Naive thymus-derived CD8-positive, alpha-beta T cell (primary cell): ENCODE measurements at regions of chr1 and their contacts with region 1.

Region 1: DNA sequence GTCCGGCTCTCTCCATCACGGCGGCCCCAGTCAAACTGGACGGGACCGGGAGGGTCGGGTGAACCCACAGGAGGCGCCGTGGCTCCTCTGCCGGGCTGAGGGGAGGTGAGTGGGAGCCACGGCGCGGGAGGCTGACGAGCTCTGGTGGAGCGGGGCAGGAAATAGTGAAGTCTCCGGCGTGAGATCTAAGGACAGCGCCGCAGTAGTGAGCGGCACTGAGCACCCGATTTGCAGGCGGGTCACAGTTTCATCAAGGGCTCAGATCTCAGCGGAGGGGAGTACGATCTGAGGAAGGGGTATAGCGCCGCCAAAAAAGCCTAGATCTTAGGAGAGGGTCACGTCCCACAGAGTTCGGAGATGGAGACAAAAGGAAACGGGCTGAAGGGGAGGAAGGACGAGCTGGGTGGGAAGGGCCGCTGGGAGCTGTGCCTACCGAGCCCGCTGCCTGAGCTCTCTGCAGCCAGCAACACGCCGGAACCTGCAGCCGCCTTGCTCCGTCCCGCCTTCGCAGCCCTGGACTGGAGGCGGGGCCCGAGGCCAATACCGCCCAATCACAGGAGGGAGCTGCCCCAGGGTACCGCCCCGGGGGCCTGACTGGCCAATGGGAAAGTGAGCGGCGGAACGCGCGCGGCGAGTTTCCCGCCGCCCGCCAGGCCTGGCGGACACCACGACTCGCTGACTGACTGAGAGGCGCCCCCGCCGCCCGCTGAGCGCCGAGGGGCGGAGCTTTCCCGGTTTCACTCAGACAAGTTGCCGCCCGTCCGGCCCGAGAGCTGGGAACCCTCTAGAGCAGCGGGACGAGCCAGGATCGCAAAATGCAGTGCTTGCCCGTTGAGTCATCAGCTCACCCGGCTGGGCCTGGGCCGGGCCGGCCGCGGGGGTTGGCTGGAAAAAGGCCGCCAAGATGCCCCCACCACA is 1.9 kb downstream of the SFN start:
- DNase-seq: peak; percentile 88 to 96 (median 93)
- ATAC-seq: peak; percentile 92 to 94
- H3K4me3 Mint-ChIP-seq: peak overlapping the region; percentile 87 to 100 (median 98)
- H3K27ac Mint-ChIP-seq: peak overlapping the region; percentile 86 to 99 (median 94)
- H3K4me1 Mint-ChIP-seq: peaks cover 10 to 29% (median 24%) of the 10 kb centered on the region in 4 donors
- H3K27me3 Mint-ChIP-seq: no peaks in the 10 kb centered on the region

Region 2: DNA sequence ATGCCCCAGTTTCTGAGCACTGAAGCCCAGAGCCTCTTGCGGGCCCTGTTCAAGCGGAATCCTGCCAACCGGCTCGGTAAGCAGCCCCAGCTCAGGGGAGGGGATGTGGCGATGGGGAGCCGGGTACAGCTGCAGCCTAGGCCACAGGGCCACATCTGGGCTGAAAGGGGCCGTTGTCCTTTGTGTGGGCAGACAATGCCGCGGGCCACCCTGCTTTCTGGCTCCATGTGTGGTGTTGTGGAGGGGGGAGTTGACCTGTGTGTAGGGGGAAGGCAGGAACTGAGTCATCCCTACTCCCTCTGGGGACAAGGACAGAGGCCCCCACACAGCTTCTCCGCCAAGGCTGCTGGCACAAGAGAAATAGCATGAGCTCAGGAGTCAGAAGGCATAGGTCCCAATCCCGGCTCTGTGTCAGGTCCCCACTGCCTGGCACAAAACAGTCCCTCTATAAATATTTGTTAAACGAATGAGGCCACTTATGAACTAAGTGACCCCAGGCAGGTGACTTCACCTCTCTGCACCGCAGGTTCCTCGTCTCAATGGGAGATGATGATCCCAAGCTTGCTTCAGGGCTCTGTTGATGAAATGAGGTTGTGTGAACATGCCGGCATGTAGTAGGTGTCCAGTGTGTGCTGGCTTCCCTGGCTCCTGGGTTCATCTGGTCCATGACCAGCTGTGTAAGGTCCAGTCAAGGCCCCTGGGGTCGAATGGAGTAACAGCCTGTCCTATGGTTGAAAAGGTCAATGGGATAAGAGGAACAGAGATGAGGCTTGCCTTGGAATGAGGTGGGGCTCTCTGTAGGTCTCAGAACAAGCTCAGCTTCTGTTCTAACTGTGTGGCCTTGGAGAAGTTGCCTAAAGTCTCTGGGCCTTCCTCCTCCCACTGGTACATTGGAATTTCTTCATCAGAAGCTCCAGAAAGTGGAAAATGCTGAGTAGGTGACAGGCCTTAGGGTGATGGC is 309.0 kb before region 1 on chr1:
- POLR2A ChIA-PET with region 1: interaction called, 12 read pairs
- DNase-seq: no peak
- ATAC-seq: no peak
- H3K4me3 Mint-ChIP-seq: no peak overlapping the region
- H3K27ac Mint-ChIP-seq: peak overlapping the region in 5 of 10 donors; percentile 15 to 51 (median 32)
- H3K4me1 Mint-ChIP-seq: peaks cover 0 to 16% (median 5%) of the 10 kb centered on the region in 4 donors
- H3K27me3 Mint-ChIP-seq: no peaks in the 10 kb centered on the region

Region 3: GRCh38 chr1:26780344-26780957 is 84.4 kb before region 1 on chr1:
- POLR2A ChIA-PET with region 1: no interaction called
- DNase-seq: no peak
- ATAC-seq: no peak
- H3K4me3 Mint-ChIP-seq: no peak overlapping the region
- H3K27ac Mint-ChIP-seq: peak overlapping the region in 8 of 10 donors; percentile 6 to 70 (median 26)
- H3K4me1 Mint-ChIP-seq: peaks cover 25 to 60% (median 52%) of the 10 kb centered on the region in 4 donors
- H3K27me3 Mint-ChIP-seq: no peaks in the 10 kb centered on the region

Region 4: GRCh38 chr1:26833432-26834405 is 31.1 kb before region 1 on chr1:
- POLR2A ChIA-PET with region 1: interaction called, 14 read pairs
- DNase-seq: peak; percentile 74 to 94 (median 90)
- ATAC-seq: peak; percentile 97 to 98
- H3K4me3 Mint-ChIP-seq: peak overlapping the region; percentile 69 to 90 (median 81)
- H3K27ac Mint-ChIP-seq: peak overlapping the region; percentile 97 to 100 (median 99)
- H3K4me1 Mint-ChIP-seq: peaks cover 42 to 71% (median 69%) of the 10 kb centered on the region in 4 donors
- H3K27me3 Mint-ChIP-seq: peaks cover 0 to 2% (median 0%) of the 10 kb centered on the region in 5 donors

Region 5: GRCh38 chr1:26889551-26890466 is 24.9 kb after region 1 on chr1 and contains the start of gene GPN2:
- POLR2A ChIA-PET with region 1: interaction called, 23 read pairs
- DNase-seq: peak; percentile 63 to 88 (median 74)
- ATAC-seq: peak; percentile 94 to 95
- H3K4me3 Mint-ChIP-seq: peak within 1 kb of the TSS; percentile 89 to 97 (median 94)
- H3K27ac Mint-ChIP-seq: peak within 1 kb of the TSS; percentile 90 to 98 (median 96)
- H3K4me1 Mint-ChIP-seq: peaks cover 19 to 49% (median 40%) of the 10 kb centered on the region in 4 donors
- H3K27me3 Mint-ChIP-seq: no peaks in the 10 kb centered on the region
- polyA plus RNA-seq, gene GPN2: 9.7 to 14.8 (median 12.5) TPM

Region 6: DNA sequence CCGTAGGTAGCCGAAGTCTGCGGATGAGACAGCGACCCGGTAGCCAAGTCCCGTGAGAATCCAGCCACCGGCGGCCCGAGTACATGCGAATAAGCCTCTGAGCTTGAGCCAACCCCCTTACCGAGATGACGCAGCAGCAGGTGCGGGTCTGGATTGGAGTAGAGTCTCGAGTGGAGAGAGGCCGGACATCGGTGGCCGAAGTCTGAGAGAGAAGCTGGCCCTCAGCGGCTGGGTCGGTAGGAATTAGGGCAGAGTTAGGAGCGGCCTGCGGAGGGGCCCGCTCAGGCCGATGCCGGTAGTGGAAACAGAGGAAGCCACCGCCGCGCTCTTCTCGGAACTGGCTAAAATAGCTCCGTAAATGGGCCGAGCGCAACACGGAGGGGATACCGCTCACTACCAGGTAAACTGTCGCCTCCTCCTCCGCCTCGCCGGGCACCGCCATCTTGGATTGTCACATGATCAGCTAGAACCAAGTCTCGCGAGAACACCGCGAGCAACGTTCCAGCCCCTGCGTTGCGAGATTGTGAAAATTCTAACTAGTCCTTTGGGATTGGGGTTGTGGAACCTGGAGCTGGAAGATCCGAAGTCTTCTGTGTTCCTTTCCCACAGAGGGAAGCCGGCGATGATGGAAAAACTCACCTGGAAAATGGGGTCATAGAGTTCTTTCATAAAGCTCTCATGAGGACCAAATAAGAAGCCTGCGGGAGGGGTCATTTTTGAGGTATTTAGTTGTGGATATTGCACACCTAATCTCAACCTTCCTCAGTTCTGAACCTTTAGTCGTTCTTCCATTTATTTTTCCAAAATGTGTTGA is 35.3 kb after region 1 on chr1 and contains the start of gene GPATCH3:
- POLR2A ChIA-PET with region 1: interaction called, 11 read pairs
- DNase-seq: peak; percentile 81 to 96 (median 87)
- ATAC-seq: peak; percentile 95 to 97
- H3K4me3 Mint-ChIP-seq: peak within 1 kb of the TSS; percentile 89 to 99 (median 98)
- H3K27ac Mint-ChIP-seq: peak within 1 kb of the TSS; percentile 96 to 100 (median 99)
- H3K4me1 Mint-ChIP-seq: peaks cover 14 to 44% (median 30%) of the 10 kb centered on the region in 4 donors
- H3K27me3 Mint-ChIP-seq: no peaks in the 10 kb centered on the region
- polyA plus RNA-seq, gene GPATCH3: 10.9 to 15.2 (median 11.5) TPM

Region 7: GRCh38 chr1:27057801-27058625 is 193.1 kb after region 1 on chr1:
- POLR2A ChIA-PET with region 1: no interaction called
- DNase-seq: no peak
- ATAC-seq: no peak
- H3K4me3 Mint-ChIP-seq: no peak overlapping the region
- H3K27ac Mint-ChIP-seq: peak overlapping the region in 1 of 10 donors; percentile 9
- H3K4me1 Mint-ChIP-seq: no peaks in the 10 kb centered on the region
- H3K27me3 Mint-ChIP-seq: no peaks in the 10 kb centered on the region

Region 8: GRCh38 chr1:27659497-27660299 is 794.8 kb after region 1 on chr1:
- POLR2A ChIA-PET with region 1: no interaction called
- DNase-seq: peak; percentile 75 to 92 (median 80)
- ATAC-seq: peak; percentile 70 to 74
- H3K4me3 Mint-ChIP-seq: peak overlapping the region; percentile 78 to 98 (median 92)
- H3K27ac Mint-ChIP-seq: peak overlapping the region; percentile 95 to 100 (median 98)
- H3K4me1 Mint-ChIP-seq: peaks cover 42 to 64% (median 49%) of the 10 kb centered on the region in 4 donors
- H3K27me3 Mint-ChIP-seq: no peaks in the 10 kb centered on the region